ENCODE measurements at regions of chr12 and their contacts with region 1.

Region 1: DNA sequence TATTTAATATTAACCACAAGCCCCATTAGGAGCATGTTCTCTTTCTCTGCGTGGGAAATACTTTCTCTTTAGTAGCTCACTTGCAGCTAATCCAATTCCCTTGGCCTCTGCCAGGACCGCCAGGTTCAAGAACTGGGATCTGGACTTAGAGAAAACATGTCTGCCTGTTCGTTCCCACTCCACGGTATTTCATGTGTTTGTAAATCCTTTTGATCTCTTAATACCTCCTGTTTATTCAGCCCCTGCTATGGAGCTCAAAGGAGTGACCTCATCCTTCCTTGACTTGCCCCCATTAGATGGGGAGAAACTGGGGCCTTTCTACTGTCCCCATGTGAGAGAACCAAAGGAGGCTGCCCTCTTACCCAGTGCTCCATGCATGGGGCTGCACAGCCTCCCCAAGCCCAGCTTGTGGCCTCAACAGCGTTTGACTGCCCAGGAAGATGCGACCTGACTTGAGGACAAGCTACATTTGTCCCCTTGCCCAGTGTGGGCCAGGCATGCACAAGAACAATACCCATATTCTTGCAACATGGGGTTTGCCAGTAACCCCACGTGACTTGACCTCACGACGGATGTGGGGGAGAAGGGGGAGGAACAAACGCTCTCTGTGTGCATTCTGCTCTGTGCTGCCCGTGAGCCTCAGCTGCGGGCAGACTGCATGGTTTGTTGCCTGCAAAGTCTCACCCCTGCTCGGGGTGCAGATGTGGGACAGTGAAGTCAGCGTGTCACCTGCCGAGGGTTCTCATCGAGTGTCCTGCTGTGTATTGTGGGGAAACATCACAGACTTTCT is 30.3 kb downstream of the CD9 start:
- DNase-seq: peak; percentile 93
- H3K4me3 Mint-ChIP-seq: peak overlapping the region; percentile 66
- H3K27ac Mint-ChIP-seq: peak overlapping the region; percentile 95
- H3K4me1 Mint-ChIP-seq: peaks cover 26% of the 10 kb centered on the region
- H3K27me3 Mint-ChIP-seq: peaks cover 1% of the 10 kb centered on the region

Region 2: DNA sequence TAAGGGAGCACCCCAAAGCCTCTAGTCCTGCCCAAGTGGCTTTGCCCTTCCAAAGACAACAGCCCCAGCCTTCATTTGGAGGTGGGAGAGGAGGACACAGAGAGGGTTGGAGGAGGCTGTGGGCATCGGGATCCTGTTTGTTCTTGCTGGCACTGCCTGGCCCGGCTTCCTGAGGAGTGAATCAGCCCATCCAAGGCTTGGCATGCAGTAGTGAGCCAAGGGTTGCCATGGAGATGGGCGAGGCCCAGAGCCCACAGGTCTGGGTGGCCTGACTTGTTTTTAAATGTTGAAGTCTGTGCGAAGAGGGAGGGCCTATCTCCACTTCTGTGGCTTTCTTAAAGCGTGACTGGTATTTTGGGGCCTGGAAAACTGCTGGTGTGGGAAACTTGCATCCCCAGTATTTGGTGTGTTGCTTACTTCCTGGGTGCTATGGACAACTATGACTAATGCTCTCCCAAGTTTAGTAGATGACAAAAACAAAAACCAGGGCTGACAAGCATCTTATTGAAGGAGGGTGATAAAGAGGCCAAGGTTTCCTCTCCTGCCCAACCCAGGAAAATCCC is 14.5 kb before region 1 on chr12:
- intact Hi-C with region 1: loop called (anchors 1 kb)
- DNase-seq: no peak
- H3K4me3 Mint-ChIP-seq: peak overlapping the region; percentile 20
- H3K27ac Mint-ChIP-seq: peak overlapping the region; percentile 84
- H3K4me1 Mint-ChIP-seq: peaks cover 50% of the 10 kb centered on the region
- H3K27me3 Mint-ChIP-seq: no peaks in the 10 kb centered on the region

Region 3: DNA sequence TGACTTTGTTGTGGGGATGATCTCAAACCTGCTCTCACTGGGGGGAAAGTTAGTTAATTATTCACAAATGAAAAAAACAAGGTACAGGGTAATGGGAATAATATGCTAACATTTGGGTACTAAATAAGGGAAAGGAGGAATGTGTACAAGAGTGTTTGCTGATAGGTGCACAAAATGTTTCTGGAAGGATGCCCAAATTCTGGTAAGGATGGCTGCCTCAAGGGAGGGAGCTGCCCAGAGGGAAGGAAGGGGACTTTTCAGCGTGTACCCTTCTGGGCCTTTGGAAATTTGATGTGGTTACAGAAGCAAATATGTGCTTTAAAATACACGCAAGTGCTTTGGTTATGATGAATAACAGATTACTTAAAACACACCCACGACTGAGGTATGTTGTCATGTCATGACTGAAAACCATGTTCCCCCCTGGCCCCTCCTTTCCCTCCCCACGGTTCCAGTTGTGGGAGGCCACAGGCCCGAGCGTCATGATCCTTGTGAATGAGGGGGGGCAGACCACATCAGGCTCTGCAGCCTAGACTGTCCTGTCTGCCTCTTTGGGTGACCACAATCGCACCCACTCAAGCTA is 36.7 kb after region 1 on chr12:
- intact Hi-C with region 1: loop called (anchors 5 kb)
- DNase-seq: peak; percentile 67
- H3K4me3 Mint-ChIP-seq: no peak overlapping the region
- H3K27ac Mint-ChIP-seq: peak overlapping the region; percentile 81
- H3K4me1 Mint-ChIP-seq: peaks cover 16% of the 10 kb centered on the region
- H3K27me3 Mint-ChIP-seq: peaks cover 6% of the 10 kb centered on the region

Region 4: GRCh38 chr12:6278439-6279255 is 48.1 kb after region 1 on chr12:
- intact Hi-C with region 1: loop called (anchors 2 kb)
- DNase-seq: peak; percentile 97
- H3K4me3 Mint-ChIP-seq: peak overlapping the region; percentile 87
- H3K27ac Mint-ChIP-seq: peak overlapping the region; percentile 89
- H3K4me1 Mint-ChIP-seq: peaks cover 17% of the 10 kb centered on the region
- H3K27me3 Mint-ChIP-seq: peaks cover 41% of the 10 kb centered on the region

Measured in activated CD4-positive, alpha-beta T cell treated with anti-CD3 and anti-CD28 coated beads, Interleukin-2, amount 10 ng/mL, durations not matched to agents 24 days and 14 days (primary cell).